Mammary epithelial cell (primary cell): ENCODE measurements at regions of chr17 and their contacts with region 1.

Region 1: GRCh38 chr17:82205719-82206508 is 6.7 kb downstream of the CCDC57 start:
- DNase-seq: peak; percentile 98
- H3K4me3 ChIP-seq: peak overlapping the region; percentile 1 to 26 (median 18)
- H3K27ac ChIP-seq: peak overlapping the region; percentile 92
- H3K4me1 ChIP-seq: peaks cover 26% of the 10 kb centered on the region
- H3K27me3 ChIP-seq: no peaks in the 10 kb centered on the region
- CTCF ChIP-seq: peak; percentile 82 to 94

Region 2: GRCh38 chr17:81977211-81978027 is 228.5 kb before region 1 on chr17 and contains the start of gene ASPSCR1:
- CTCF ChIA-PET with region 1: no interaction called
- dilution Hi-C with region 1: loop called (anchors 10 kb)
- in situ Hi-C with region 1: no loop called
- intact Hi-C with region 1: no loop called
- DNase-seq: peak; percentile 84
- H3K4me3 ChIP-seq: peak within 1 kb of the TSS; percentile 66 to 98 (median 73)
- H3K27ac ChIP-seq: peak within 1 kb of the TSS; percentile 80
- H3K4me1 ChIP-seq: peaks cover 16% of the 10 kb centered on the region
- H3K27me3 ChIP-seq: no peaks in the 10 kb centered on the region
- CTCF ChIP-seq: no peak
- total RNA-seq, gene ASPSCR1: 13.3 to 21.3 TPM

Region 3: GRCh38 chr17:82134101-82134500 is 71.8 kb before region 1 on chr17:
- CTCF ChIA-PET with region 1: no interaction called
- dilution Hi-C with region 1: loop called (anchors 5 kb)
- in situ Hi-C with region 1: no loop called
- intact Hi-C with region 1: no loop called
- DNase-seq: peak; percentile 29
- H3K4me3 ChIP-seq: no peak overlapping the region
- H3K27ac ChIP-seq: peak overlapping the region; percentile 64
- H3K4me1 ChIP-seq: peaks cover 12% of the 10 kb centered on the region
- H3K27me3 ChIP-seq: no peaks in the 10 kb centered on the region
- CTCF ChIP-seq: no peak

Region 4: DNA sequence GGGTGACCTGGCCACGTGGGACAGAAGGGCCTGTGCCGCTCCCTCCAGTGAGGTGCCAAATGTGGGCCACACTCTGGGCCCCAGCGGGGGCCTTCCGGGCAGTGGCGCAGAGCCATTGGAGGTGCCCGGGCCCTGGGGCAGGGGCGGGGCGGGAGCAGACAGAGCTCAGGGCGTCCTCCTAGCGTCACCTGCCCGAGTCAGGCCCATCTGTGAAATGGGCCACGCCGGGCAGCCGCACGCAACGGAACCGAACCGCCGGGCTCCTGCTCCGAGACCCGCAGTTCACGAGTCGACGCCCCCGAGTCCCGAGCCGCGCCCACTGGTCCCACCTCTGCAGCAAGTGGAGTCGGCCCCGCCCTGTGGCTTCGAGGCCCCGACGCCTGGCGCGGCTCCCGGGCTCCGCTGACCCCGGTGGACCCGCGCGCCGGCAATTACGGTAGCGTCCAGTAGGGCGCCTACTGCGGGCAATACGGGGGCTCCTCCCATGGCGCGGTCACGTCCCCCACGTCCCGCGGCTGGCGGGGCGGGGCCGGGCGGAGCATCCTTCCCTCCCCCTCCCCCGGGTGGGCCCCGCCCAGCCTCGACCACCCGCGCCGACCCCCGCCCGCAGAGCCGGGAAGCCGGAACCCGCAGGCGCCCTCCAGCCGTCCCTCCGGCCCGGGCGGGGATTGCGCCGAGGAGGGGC is 24.9 kb after region 1 on chr17:
- CTCF ChIA-PET with region 1: no interaction called
- dilution Hi-C with region 1: no loop called
- in situ Hi-C with region 1: no loop called
- intact Hi-C with region 1: loop called (anchors 1 kb)
- DNase-seq: peak; percentile 78
- H3K4me3 ChIP-seq: peak overlapping the region; percentile 47 to 76 (median 75)
- H3K27ac ChIP-seq: peak overlapping the region; percentile 32
- H3K4me1 ChIP-seq: peaks cover 54% of the 10 kb centered on the region
- H3K27me3 ChIP-seq: no peaks in the 10 kb centered on the region
- CTCF ChIP-seq: peak; percentile 10 to 42

Region 5: GRCh38 chr17:82351716-82352488 is 146.0 kb after region 1 on chr17:
- CTCF ChIA-PET with region 1: no interaction called
- dilution Hi-C with region 1: loop called (anchors 5 kb)
- in situ Hi-C with region 1: no loop called
- intact Hi-C with region 1: no loop called
- DNase-seq: peak; percentile 64
- H3K4me3 ChIP-seq: no peak overlapping the region
- H3K27ac ChIP-seq: no peak overlapping the region
- H3K4me1 ChIP-seq: peaks cover 20% of the 10 kb centered on the region
- H3K27me3 ChIP-seq: no peaks in the 10 kb centered on the region
- CTCF ChIP-seq: peak; percentile 86 to 94

Region 6: DNA sequence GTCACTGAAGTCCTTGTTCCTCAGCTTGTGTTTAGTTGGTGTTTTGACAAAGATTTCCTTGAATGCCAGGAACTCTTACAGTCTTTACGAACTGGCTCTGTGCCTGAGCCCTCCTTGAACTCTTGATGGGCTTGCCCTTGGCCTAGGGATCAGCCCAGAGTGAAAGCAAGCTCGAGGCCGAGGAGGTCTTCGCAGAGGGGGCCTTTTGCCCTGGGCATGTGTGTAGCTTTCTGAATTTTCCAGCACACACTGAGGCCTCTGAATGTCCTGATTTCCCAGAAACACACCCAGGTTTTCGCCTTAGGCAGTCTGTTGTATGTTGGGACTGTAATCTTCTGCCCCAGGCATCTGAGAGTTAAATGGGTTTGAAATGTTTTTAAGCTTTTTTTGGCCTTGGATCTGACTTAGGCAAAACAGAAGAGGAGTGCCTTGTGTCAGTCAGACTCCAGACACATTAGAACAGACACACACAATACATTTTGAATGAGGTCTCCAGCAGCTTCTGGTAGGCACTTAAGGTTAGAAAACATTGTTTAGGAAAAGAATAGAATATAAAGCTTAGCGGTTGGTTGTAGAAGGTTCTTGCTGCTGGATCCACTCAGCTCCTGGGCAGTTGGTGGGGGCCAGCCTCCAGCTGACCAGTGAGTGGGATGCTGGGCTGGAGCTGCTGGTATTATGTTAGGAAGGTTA is 330.7 kb after region 1 on chr17:
- CTCF ChIA-PET with region 1: no interaction called
- dilution Hi-C with region 1: loop called (anchors 10 kb)
- in situ Hi-C with region 1: no loop called
- intact Hi-C with region 1: no loop called
- DNase-seq: peak; percentile 32
- H3K4me3 ChIP-seq: no peak overlapping the region
- H3K27ac ChIP-seq: peak overlapping the region; percentile 82
- H3K4me1 ChIP-seq: peaks cover 41% of the 10 kb centered on the region
- H3K27me3 ChIP-seq: no peaks in the 10 kb centered on the region
- CTCF ChIP-seq: no peak